B cell (primary cell): ENCODE measurements at regions of chr1 and their contacts with region 1.

Region 1: DNA sequence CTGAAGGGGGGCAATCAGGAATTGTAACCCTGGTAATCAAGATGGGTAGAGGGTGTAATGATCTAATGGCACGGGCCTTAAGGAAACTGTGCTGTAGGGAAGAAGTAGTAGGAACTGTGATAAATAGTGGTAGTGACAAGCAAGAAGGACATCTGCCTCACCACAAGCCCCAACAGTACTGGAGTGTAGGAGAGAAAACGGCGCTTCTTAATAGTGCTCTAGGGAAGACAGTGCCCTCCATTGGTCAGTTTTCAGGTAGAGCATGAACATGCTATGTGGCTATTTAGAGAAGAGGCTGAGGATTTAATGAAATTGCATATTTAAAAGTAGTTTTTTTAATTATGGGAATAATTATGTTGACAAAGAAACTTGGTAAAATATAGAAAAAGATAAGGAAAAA is 32.2 kb downstream of the SLC30A7 start:
- DNase-seq: no peak
- ATAC-seq: no peak
- H3K4me3 ChIP-seq: no peak overlapping the region
- H3K4me3 Mint-ChIP-seq: no peak overlapping the region
- H3K27ac ChIP-seq: peak overlapping the region in 1 of 2 donors; percentile 43
- H3K27ac Mint-ChIP-seq: no peak overlapping the region
- H3K4me1 ChIP-seq: peaks cover 15 to 19% of the 10 kb centered on the region in 2 donors
- H3K4me1 Mint-ChIP-seq: peaks cover 20% of the 10 kb centered on the region
- H3K27me3 ChIP-seq: no peaks in the 10 kb centered on the region
- H3K27me3 Mint-ChIP-seq: no peaks in the 10 kb centered on the region
- CTCF ChIP-seq: no peak

Region 2: GRCh38 chr1:100912019-100912418 is 16.1 kb before region 1 on chr1:
- CTCF ChIA-PET with region 1: no interaction called
- POLR2A ChIA-PET with region 1: no interaction called
- intact Hi-C with region 1: no loop called
- DNase-seq: no peak
- ATAC-seq: no peak
- H3K4me3 ChIP-seq: no peak overlapping the region
- H3K4me3 Mint-ChIP-seq: no peak overlapping the region
- H3K27ac ChIP-seq: no peak overlapping the region
- H3K27ac Mint-ChIP-seq: no peak overlapping the region
- H3K4me1 ChIP-seq: no peaks in the 10 kb centered on the region
- H3K4me1 Mint-ChIP-seq: no peaks in the 10 kb centered on the region
- H3K27me3 ChIP-seq: no peaks in the 10 kb centered on the region
- H3K27me3 Mint-ChIP-seq: no peaks in the 10 kb centered on the region
- CTCF ChIP-seq: no peak

Region 3: DNA sequence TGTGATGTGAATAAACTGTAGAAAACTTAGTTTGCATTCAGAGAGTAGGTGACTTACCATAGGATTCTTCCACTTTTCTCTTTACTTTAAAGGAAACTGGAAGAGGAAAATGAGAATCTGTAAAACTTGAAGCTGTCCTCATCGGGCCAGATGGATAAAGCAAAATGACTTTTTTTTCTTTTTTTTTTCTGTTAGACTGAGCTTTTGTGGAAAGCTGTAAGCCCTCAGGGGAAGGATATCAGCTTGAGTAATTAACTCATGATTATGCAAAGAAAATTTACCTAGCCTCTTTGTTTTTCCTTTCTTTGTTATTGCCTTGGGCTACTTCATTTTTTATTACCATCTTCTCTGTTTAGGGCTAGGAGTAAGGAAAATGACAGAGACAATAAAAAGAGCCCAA is 44.1 kb after region 1 on chr1:
- CTCF ChIA-PET with region 1: no interaction called
- POLR2A ChIA-PET with region 1: no interaction called
- intact Hi-C with region 1: loop called (anchors 5 kb)
- DNase-seq: no peak
- ATAC-seq: no peak
- H3K4me3 ChIP-seq: no peak overlapping the region
- H3K4me3 Mint-ChIP-seq: no peak overlapping the region
- H3K27ac ChIP-seq: peak overlapping the region in 1 of 2 donors; percentile 17
- H3K27ac Mint-ChIP-seq: no peak overlapping the region
- H3K4me1 ChIP-seq: peaks cover 15 to 18% of the 10 kb centered on the region in 2 donors
- H3K4me1 Mint-ChIP-seq: peaks cover 20% of the 10 kb centered on the region
- H3K27me3 ChIP-seq: no peaks in the 10 kb centered on the region
- H3K27me3 Mint-ChIP-seq: no peaks in the 10 kb centered on the region
- CTCF ChIP-seq: no peak

Region 4: GRCh38 chr1:101136739-101137138 is 208.6 kb after region 1 on chr1:
- CTCF ChIA-PET with region 1: interaction called, 10 read pairs
- POLR2A ChIA-PET with region 1: no interaction called
- intact Hi-C with region 1: loop called (anchors 5 kb)
- DNase-seq: peak; percentile 54
- ATAC-seq: peak; percentile 70
- H3K4me3 ChIP-seq: no peak overlapping the region
- H3K4me3 Mint-ChIP-seq: peak overlapping the region; percentile 17
- H3K27ac ChIP-seq: peak overlapping the region; percentile 1 to 32
- H3K27ac Mint-ChIP-seq: peak overlapping the region; percentile 70
- H3K4me1 ChIP-seq: peaks cover 38 to 40% of the 10 kb centered on the region in 2 donors
- H3K4me1 Mint-ChIP-seq: peaks cover 49% of the 10 kb centered on the region
- H3K27me3 ChIP-seq: no peaks in the 10 kb centered on the region
- H3K27me3 Mint-ChIP-seq: no peaks in the 10 kb centered on the region
- CTCF ChIP-seq: no peak